AG04449 (cell line): ENCODE measurements at regions of chr15 and their contacts with region 1.

Region 1: DNA sequence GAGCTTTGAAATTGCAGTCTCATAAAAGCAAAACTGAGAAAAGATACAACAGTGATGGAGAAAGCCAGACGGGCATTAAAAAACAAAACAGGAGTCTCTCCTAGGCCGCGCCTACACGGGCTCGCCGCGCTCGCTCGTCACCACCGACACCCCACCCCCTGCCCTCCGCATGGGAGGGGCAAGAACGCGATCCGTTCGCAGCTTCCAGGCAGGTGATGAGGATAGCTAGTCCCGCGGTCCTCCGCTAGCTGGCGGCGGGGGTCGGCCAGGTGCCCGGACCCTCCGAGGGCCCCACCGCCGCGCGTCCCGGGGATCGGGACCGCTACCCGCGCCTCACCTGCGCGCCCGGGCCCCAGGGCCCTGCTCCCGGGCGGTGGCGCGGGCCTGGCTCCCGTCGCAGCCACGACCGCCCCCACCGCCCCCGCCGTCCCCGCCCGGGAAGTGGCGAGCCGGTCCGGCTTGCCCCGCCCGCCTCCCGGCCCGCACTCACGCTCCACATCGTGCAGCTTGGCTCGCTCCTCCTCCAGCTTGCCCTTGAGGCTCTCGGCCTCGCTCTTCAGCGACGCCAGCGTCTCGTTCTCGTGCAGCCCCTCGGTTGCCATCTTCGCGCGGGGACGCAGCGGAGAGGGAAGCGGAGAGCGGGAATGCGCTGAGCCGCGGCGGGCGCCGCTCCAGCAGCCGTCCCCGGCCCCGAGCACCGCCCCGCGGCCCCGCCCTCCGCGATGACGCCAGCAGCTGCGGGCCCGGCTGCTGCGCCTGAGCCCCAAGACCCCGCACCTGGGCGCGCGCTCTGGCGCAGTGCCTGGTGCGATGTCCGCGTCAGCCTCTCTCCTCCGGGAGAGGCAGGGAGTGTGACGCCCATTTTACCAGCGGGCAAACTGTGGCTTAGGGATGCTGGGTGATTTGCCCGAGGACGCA is 11.7 kb downstream of the GNB5 start:
- DNase-seq: no peak
- H3K4me3 ChIP-seq: peak overlapping the region; percentile 92
- CTCF ChIP-seq: no peak

Region 2: DNA sequence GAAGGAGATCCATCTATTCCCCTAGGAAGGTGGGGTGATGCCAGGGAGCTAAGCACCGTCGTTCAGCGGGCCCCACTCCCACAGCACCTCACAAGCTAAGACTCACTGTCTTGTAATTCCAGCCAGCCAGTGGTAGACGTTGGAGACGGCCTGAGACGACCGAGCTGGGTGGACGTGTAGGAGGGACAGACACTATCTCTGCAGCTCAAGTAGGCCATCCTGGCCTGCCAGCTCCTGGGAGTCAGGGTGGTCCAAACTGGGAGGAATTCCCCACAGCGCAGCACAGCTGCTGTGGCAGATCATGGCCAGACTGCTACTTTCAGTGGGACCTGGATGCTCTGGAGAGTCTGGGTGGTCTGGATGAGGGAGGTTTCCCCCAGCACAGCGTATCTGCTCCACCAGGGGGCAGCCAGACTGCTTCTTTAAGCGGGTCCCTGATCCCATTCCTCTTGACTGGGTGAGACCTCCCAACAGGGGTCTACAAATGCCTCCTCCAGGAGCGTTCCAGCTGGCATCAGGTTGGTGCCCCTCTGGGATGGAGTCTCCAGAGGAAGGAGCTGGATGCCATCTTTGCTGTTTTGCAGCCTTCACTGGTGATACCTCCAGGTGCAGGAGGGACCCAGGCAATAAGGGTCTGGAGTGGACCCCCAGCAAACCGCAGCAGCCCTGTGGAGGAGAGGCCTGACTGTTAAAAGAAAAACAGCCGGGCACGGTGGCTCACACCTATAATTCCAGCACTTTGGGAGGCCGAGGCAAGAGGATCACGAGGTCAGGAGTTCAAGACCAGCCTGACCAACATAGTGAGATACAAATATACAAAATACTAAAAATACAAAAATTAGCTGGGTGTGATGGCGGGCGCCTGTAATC is 16.0 kb before region 1 on chr15:
- CTCF ChIA-PET with region 1: interaction called, 16 read pairs
- POLR2A ChIA-PET with region 1: no interaction called
- DNase-seq: no peak
- H3K4me3 ChIP-seq: no peak overlapping the region
- CTCF ChIP-seq: no peak

Region 3: GRCh38 chr15:52191207-52191606 is 11.7 kb after region 1 on chr15 and contains the start of gene GNB5:
- CTCF ChIA-PET with region 1: interaction called, 27 read pairs
- POLR2A ChIA-PET with region 1: no interaction called
- DNase-seq: no peak
- H3K4me3 ChIP-seq: no peak within 1 kb of the TSS
- CTCF ChIP-seq: no peak

Region 4: DNA sequence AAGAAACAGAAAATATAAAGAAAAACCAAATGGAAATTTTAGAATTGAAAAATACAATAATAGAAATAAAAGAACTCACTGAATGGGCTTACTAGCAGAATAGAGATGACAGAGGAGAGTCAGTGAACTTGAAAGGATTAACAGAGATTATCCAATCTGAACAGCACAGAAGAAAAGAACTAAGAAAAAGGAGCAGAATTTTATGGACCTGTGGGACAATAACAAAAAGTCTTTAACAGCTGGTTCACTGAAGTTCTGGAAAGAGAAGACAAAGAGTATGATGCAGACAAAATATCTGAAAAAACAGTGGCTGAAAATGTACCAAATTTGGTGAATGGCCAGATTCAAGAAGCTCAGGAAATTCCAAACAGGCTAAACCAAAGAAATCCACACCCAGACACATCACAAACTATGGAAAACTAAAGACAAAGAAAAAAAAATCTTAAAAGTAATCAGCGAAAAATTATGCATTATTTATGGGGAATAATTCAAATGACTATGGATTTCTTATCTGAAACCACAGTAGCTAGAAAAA is 21.4 kb after region 1 on chr15:
- CTCF ChIA-PET with region 1: interaction called, 13 read pairs
- POLR2A ChIA-PET with region 1: no interaction called
- DNase-seq: no peak
- H3K4me3 ChIP-seq: no peak overlapping the region
- CTCF ChIP-seq: no peak

Region 5: GRCh38 chr15:52284164-52284563 is 104.6 kb after region 1 on chr15:
- CTCF ChIA-PET with region 1: no interaction called
- POLR2A ChIA-PET with region 1: no interaction called
- DNase-seq: no peak
- H3K4me3 ChIP-seq: no peak overlapping the region
- CTCF ChIP-seq: no peak

Region 6: GRCh38 chr15:52709190-52709981 is 529.8 kb after region 1 on chr15:
- CTCF ChIA-PET with region 1: no interaction called
- POLR2A ChIA-PET with region 1: no interaction called
- DNase-seq: no peak
- H3K4me3 ChIP-seq: no peak overlapping the region
- CTCF ChIP-seq: no peak

Region 7: GRCh38 chr15:52735231-52736089 is 555.9 kb after region 1 on chr15:
- CTCF ChIA-PET with region 1: interaction called, 17 read pairs
- POLR2A ChIA-PET with region 1: no interaction called
- DNase-seq: peak; percentile 5
- H3K4me3 ChIP-seq: no peak overlapping the region
- CTCF ChIP-seq: peak; percentile 48